Pancreas (tissue), 10 donors: ENCODE measurements at regions of chr1 and their contacts with region 1.

Region 1: DNA sequence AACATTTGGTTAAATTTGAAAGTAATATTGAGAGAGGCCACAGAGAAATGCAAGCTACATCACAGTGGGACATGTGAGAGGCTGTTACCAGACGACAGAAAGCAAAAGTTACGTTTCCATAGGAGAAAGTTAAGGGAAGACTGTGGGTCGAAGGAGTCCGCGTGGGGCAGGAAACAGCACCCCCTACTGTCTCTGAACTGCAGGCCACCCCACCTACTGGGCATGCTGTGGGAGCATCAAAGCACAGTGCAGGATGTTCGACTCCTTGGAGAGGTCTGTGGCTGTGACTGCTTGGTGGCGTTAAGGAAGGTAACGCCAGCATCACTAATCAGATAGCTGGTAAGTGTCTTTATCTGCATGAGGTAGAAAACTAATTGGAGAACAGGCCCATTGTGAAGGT is 123.9 kb downstream of the PTBP2 start:
- DNase-seq: peak in 5 of 6 donors; percentile 17 to 65 (median 40)
- ATAC-seq: peak; percentile 73 to 89 (median 84)
- H3K4me3 ChIP-seq: no peak overlapping the region
- H3K27ac ChIP-seq: no peak overlapping the region
- H3K4me1 ChIP-seq: no peaks in the 10 kb centered on the region
- H3K27me3 ChIP-seq: no peaks in the 10 kb centered on the region
- CTCF ChIP-seq: peak; percentile 39 to 67 (median 52)

Region 2: GRCh38 chr1:96236156-96236739 is 609.2 kb before region 1 on chr1:
- intact Hi-C with region 1: loop called in 1 of 3 experiments (anchors 10 kb)
- DNase-seq: peak in 1 of 6 donors; percentile 21
- ATAC-seq: peak in 3 of 4 donors; percentile 70 to 78 (median 74)
- H3K4me3 ChIP-seq: no peak overlapping the region
- H3K27ac ChIP-seq: no peak overlapping the region
- H3K4me1 ChIP-seq: peaks cover 0 to 4% (median 0%) of the 10 kb centered on the region in 3 donors
- H3K27me3 ChIP-seq: no peaks in the 10 kb centered on the region
- CTCF ChIP-seq: peak in 3 of 4 donors; percentile 21 to 42 (median 30)

Region 3: DNA sequence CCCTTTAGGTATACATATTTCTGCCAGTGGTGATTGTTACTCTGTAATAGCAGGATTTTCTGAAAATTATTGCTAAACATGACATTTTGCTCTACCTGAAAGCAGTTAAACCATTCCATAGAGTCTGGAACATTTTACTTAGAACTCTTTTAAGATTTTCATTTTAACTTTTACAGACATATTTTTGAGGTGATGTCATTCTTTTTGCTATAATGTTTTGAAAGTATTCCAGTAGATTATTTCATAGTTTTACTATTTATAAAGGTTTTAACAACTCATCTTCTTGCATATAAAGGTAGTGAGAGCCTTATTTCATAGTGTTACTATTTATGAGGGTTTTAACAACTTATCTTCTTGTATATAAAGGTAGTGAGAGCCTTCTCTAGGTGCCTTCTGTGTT is 81.0 kb before region 1 on chr1:
- intact Hi-C with region 1: no loop called
- DNase-seq: no peak
- ATAC-seq: no peak
- H3K4me3 ChIP-seq: no peak overlapping the region
- H3K27ac ChIP-seq: no peak overlapping the region
- H3K4me1 ChIP-seq: no peaks in the 10 kb centered on the region
- H3K27me3 ChIP-seq: no peaks in the 10 kb centered on the region
- CTCF ChIP-seq: no peak

Region 4: DNA sequence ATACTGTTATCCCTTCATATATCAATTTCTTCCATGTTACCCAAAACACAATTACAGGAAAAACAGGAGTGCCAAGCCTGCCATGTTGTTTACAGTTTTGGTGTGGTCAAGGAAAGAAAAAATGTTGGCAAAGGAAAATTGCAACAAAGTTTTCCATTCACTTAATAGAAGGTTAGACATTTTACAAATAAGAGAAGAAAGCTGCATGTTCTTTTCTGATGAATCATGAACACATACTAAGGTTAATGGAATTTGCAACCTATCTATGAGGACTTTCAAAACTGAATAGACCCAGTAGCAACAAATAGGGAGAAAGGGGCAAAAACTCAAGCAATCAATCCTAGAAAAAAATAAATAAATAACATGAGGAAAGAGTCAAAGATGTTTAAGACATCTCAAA is 518.6 kb after region 1 on chr1:
- intact Hi-C with region 1: no loop called
- DNase-seq: no peak
- ATAC-seq: no peak
- H3K4me3 ChIP-seq: no peak overlapping the region
- H3K27ac ChIP-seq: no peak overlapping the region
- H3K4me1 ChIP-seq: no peaks in the 10 kb centered on the region
- H3K27me3 ChIP-seq: no peaks in the 10 kb centered on the region
- CTCF ChIP-seq: no peak